Gastrocnemius medialis (tissue), 4 donors: ENCODE measurements at regions of chr12 and their contacts with region 1.

Region 1: DNA sequence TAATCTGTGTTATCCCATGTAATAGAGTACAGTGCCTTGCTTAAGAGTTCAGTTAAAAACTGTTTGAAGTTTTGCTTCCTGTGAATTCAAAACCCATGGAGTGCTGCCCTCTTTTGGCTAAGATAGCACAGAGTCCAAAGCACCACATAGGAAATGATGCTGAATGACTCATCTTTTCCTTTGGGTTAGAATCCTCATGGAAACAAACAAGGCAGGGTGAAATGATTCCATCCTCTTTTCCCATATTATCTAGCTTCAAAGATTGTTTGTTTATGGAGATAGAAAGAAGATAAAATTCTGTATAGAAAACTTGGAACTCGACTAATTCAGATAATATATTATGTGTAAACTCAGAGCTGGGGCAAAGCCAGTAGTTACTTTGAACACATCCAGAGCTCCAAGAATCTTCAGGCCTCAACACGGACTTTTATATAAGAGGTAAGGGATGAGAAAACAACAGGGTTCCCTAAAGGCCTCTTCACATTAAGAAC is 87.4 kb downstream of the OTOGL start:
- DNase-seq: peak; percentile 11 to 40
- ATAC-seq: peak; percentile 87 to 88
- H3K4me3 ChIP-seq: no peak overlapping the region
- H3K27ac ChIP-seq: peak overlapping the region; percentile 80 to 85 (median 84)
- H3K4me1 ChIP-seq: peaks cover 21 to 22% of the 10 kb centered on the region in 2 donors
- H3K27me3 ChIP-seq: no peaks in the 10 kb centered on the region
- CTCF ChIP-seq: peak; percentile 32 to 68 (median 61)
- POLR2A ChIP-seq: no peak

Region 2: DNA sequence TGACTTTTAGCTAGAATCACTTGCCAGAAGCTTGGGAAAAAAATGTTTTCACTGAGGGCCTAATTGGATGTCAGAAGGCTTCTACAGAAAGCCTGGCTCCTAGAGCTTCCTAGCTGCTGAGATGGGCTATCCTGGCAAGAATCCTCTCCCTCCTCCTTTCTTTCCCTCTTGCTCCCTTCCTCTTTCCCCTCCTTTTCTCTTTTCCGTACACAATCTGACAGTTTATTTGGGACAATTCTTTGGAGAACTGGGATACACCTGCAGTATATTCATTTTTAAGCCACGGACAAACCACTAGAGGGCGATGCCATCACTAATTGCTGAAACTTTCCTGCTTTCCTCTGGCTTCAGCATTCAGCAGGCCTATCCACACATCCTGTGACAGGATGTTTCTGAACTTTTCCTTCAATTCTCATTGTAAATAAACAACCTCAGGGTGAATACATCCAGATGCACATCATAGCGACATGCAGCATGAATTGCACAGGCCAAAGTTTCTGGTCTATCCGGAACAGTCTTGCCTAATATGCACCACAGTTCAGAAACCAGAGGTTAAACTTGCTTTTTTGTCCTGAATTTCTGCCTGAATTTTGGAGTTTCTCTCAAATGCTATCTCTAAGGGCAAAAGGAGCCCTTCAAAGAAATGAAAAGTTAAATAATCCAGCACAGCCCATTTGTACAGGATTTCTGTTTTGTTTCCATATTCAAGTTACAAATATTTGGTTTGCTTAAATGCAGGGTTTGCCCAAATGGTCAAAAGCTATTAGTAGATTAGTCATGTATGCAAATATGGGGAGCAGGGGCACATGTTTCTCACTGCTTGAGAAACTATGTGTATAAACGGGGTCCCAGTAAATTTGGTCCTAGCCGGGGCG is 638.8 kb before region 1 on chr12:
- in situ Hi-C with region 1: loop called in 1 of 4 experiments (anchors 10 kb)
- intact Hi-C with region 1: loop called (anchors 5 kb)
- DNase-seq: no peak
- ATAC-seq: no peak
- H3K4me3 ChIP-seq: no peak overlapping the region
- H3K27ac ChIP-seq: no peak overlapping the region
- H3K4me1 ChIP-seq: peaks cover 0 to 5% of the 10 kb centered on the region in 2 donors
- H3K27me3 ChIP-seq: no peaks in the 10 kb centered on the region
- CTCF ChIP-seq: peak in 3 of 5 experiments; percentile 15 to 56 (median 54)
- POLR2A ChIP-seq: no peak

Region 3: DNA sequence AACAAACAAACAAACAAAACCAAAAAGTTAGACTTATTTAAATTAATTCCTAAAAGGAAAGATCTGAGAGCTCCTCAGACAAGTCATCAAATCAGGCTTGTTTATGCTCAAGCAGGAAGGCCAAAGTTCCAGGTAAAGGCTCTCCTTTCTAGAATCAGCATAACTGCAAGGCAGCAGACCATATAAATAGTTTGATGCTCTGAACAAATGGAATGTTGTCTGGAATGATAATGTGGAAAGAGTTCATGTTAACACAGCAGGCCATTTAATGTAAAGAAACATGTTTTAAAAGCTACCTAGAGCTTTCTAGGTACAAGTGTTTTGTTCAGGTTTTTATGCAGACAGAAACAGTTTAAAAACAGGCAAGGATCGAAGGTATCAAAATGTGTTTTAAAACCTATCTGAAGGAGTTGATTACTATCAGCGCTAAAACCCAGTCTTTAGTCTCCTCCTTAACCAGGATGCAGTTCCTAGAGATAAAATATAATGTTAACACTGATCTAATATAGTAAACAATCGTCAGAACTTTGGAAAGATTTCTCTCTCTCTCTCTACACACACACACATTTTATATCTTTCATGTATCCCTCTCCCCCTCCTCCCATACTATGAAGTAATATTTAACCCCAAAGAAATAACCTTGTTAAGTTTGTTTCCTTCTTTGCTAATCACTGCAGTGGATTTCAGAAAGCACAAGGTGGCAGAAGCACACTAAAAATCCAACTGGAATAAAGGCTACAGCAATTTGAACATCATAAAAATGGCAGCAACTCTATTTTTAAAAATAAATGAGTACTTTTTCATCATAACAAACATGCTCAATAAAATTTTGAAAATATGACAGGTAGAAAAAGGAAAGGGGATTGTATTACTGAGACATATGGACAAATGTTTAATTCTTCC is 631.5 kb before region 1 on chr12:
- in situ Hi-C with region 1: loop called in 1 of 4 experiments (anchors 10 kb)
- intact Hi-C with region 1: no loop called
- DNase-seq: no peak
- ATAC-seq: no peak
- H3K4me3 ChIP-seq: no peak overlapping the region
- H3K27ac ChIP-seq: no peak overlapping the region
- H3K4me1 ChIP-seq: no peaks in the 10 kb centered on the region
- H3K27me3 ChIP-seq: no peaks in the 10 kb centered on the region
- CTCF ChIP-seq: peak in 3 of 5 experiments; percentile 23 to 32 (median 29)
- POLR2A ChIP-seq: no peak

Region 4: DNA sequence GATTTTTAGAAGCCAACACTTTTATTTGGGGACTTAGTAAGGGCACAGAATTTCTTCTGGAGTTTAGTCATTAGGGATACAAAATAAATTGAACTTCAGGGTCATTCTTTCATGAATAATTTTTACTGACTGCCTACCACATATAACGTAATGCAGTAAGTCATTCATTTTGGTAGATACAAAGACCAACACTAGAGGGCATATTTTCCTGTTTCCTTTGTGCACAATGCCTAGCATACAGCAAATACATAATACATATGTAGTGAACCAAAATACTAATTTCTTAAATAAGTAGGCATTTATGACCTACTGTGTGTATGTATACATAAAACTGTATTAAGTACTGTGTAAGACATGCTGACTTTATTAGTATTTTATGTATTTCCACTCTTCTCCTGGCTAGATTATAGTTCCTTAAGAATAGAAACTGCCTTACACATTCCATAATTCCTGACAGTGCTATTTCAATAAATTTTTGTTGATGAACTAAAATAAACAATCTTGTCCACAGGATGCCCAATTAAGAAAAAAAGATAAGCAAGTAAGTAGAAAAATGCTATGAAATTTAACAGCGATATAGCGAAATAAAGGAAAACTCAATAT is 299.8 kb before region 1 on chr12:
- in situ Hi-C with region 1: loop called in 1 of 4 experiments (anchors 25 kb)
- intact Hi-C with region 1: loop called (anchors 2 kb)
- DNase-seq: no peak
- ATAC-seq: peak in 1 of 2 donors; percentile 61
- H3K4me3 ChIP-seq: no peak overlapping the region
- H3K27ac ChIP-seq: no peak overlapping the region
- H3K4me1 ChIP-seq: peaks cover 40 to 56% of the 10 kb centered on the region in 2 donors
- H3K27me3 ChIP-seq: no peaks in the 10 kb centered on the region
- CTCF ChIP-seq: peak; percentile 13 to 61 (median 37)
- POLR2A ChIP-seq: no peak

Region 5: DNA sequence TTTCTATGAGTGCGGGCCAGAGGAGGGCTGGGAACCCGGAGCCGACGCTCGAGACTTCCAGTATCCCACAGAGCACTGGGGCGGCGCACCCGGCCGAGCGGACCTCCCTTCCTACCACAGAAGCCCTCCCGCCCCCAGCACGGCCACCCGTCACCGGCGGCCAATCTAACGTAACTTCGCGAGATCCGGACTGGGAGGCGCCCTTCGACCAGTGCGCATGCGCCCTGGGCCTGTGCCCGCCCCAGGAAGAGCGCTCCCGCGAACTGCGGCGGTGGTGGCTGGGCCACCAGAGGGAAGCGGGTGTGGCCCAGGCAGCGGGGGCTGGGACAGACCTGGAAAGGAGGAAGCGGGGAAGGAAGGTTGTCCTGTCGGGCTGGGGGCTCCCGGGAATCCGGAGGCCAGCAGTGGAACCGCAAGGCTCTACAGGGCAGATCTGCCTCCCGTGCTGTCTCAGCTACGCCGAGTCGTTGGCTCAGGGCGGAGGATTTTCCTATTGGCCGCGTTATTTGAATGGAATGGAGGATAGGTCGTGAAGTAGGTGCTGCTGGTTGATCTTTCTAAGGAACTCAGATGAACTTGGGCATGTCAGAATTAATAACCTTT is 251.7 kb before region 1 on chr12 and contains the start of gene PPP1R12A:
- in situ Hi-C with region 1: no loop called
- intact Hi-C with region 1: loop called (anchors 2 kb)
- DNase-seq: peak; percentile 93 to 94
- ATAC-seq: peak; percentile 91 to 93
- H3K4me3 ChIP-seq: peak within 1 kb of the TSS; percentile 78 to 95 (median 92)
- H3K27ac ChIP-seq: peak within 1 kb of the TSS; percentile 89 to 95 (median 92)
- H3K4me1 ChIP-seq: peaks cover 27 to 40% of the 10 kb centered on the region in 2 donors
- H3K27me3 ChIP-seq: no peaks in the 10 kb centered on the region
- CTCF ChIP-seq: peak in 2 of 5 experiments; percentile 39 to 40
- POLR2A ChIP-seq: peak; percentile 92 to 95
- total RNA-seq, gene PPP1R12A: 38.0 to 65.7 (median 47.2) TPM

Region 6: GRCh38 chr12:80299976-80300375 is 113.2 kb after region 1 on chr12:
- in situ Hi-C with region 1: no loop called
- intact Hi-C with region 1: no loop called
- DNase-seq: no peak
- ATAC-seq: no peak
- H3K4me3 ChIP-seq: no peak overlapping the region
- H3K27ac ChIP-seq: no peak overlapping the region
- H3K4me1 ChIP-seq: no peaks in the 10 kb centered on the region
- H3K27me3 ChIP-seq: no peaks in the 10 kb centered on the region
- CTCF ChIP-seq: no peak
- POLR2A ChIP-seq: no peak